GM13976 (cell line): ENCODE measurements at regions of chr1 and their contacts with region 1.

Region 1: DNA sequence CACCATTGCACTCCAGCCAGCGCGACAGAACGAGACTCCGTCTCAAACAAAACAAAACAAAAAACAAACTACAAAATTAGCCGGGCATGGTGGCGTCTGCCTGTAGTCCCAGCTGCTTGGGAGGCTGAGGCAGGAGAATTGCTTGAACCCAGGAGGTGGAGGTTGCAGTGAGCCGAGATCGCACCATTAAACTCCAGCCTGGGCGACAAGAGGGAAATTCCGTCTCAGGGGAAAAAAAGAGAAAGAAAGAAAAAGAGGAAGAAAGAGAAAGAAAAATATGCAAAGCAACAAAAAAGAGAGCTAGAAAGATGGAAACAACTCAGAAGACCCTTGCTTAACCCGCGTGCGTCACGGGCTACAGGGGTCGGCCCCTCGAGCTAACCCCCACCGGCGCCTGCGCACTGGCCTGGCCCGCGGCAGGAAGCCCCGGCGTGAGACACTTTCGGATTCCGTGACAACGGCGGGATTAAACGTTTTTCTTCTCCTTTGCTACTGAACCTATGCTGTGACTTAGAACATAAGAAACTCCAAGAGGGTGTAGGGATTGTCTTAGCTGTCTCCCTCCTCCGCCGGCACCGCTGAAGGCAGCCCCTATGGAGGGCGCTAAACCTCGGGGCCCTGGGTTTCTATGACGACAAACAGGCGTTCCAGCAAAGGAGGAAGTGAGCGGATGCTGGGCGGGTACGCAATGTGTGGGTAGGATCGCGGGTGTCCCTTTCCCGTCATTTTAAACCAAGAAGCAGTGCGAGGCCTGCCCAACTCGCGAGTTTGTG is at the start of gene AXDND1:
- DNase-seq: peak; percentile 90
- CTCF ChIP-seq: peak; percentile 15

Region 2: GRCh38 chr1:178542560-178543356 is 822.7 kb before region 1 on chr1:
- in situ Hi-C with region 1: loop called (anchors 25 kb)
- DNase-seq: peak; percentile 93
- CTCF ChIP-seq: peak; percentile 99

Region 3: DNA sequence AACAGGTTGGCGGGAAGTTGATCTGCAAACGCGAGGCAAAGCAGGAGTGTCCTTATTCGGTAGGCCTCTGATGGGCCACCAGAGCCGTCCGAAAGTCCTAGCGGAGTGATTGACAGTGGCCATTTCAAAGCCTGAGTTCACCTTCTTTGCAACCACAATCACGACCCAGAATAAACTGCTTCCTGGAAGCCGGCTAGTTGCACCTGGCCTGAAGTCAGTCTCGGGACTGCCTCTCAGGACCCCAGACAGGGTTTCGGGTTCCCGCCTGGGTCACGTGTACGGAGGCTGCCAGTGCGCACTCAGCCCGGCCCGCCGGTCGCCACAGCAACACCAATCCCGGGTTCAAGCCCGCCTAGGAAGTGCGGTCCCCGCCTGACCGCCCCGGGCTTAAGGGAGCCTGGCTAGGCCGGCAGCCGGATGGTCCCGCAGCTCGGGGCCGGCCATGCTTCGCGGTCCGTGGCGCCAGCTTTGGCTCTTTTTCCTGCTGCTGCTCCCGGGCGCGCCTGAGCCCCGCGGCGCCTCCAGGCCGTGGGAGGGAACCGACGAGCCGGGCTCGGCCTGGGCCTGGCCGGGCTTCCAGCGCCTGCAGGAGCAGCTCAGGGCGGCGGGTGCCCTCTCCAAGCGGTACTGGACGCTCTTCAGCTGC is 283.7 kb before region 1 on chr1 and contains the start of gene TOR3A:
- in situ Hi-C with region 1: loop called (anchors 5 kb)
- DNase-seq: peak; percentile 96
- CTCF ChIP-seq: no peak

Region 4: GRCh38 chr1:179121159-179121938 is 244.2 kb before region 1 on chr1:
- in situ Hi-C with region 1: loop called (anchors 10 kb)
- DNase-seq: peak; percentile 52
- CTCF ChIP-seq: peak; percentile 28